ENCODE measurements at regions of chr19 and their contacts with region 1.

Region 1: GRCh38 chr19:20565321-20566018 is at the start of gene ZNF737:
- DNase-seq: peak; percentile 85 to 96 (median 90)
- H3K4me3 ChIP-seq: peak within 1 kb of the TSS; percentile 88
- H3K4me3 Mint-ChIP-seq: peak within 1 kb of the TSS; percentile 96 to 100 (median 100)
- H3K27ac ChIP-seq: peak within 1 kb of the TSS; percentile 85
- H3K27ac Mint-ChIP-seq: peak within 1 kb of the TSS; percentile 96 to 100 (median 99)
- H3K4me1 ChIP-seq: peaks cover 6% of the 10 kb centered on the region
- H3K4me1 Mint-ChIP-seq: peaks cover 31 to 46% (median 42%) of the 10 kb centered on the region in 3 donors
- H3K27me3 ChIP-seq: no peaks in the 10 kb centered on the region
- H3K27me3 Mint-ChIP-seq: no peaks in the 10 kb centered on the region
- total RNA-seq, gene ZNF737: 12.5 to 14.3 TPM

Region 2: GRCh38 chr19:20423381-20424197 is 141.9 kb before region 1 on chr19:
- CTCF ChIA-PET with region 1: interaction called, 6 read pairs
- POLR2A ChIA-PET with region 1: interaction called, 20 read pairs
- DNase-seq: peak in 4 of 5 donors; percentile 3 to 35 (median 20)
- H3K4me3 ChIP-seq: peak overlapping the region; percentile 69
- H3K4me3 Mint-ChIP-seq: peak overlapping the region; percentile 95 to 98 (median 97)
- H3K27ac ChIP-seq: no peak overlapping the region
- H3K27ac Mint-ChIP-seq: peak overlapping the region; percentile 65 to 96 (median 94)
- H3K4me1 ChIP-seq: no peaks in the 10 kb centered on the region
- H3K4me1 Mint-ChIP-seq: peaks cover 14 to 24% (median 21%) of the 10 kb centered on the region in 3 donors
- H3K27me3 ChIP-seq: no peaks in the 10 kb centered on the region
- H3K27me3 Mint-ChIP-seq: peaks cover 0 to 4% of the 10 kb centered on the region in 2 donors

Region 3: GRCh38 chr19:20616071-20616470 is 50.6 kb after region 1 on chr19:
- CTCF ChIA-PET with region 1: no interaction called
- POLR2A ChIA-PET with region 1: no interaction called
- DNase-seq: no peak
- H3K4me3 ChIP-seq: no peak overlapping the region
- H3K4me3 Mint-ChIP-seq: no peak overlapping the region
- H3K27ac ChIP-seq: no peak overlapping the region
- H3K27ac Mint-ChIP-seq: no peak overlapping the region
- H3K4me1 ChIP-seq: no peaks in the 10 kb centered on the region
- H3K4me1 Mint-ChIP-seq: peaks cover 7 to 10% (median 9%) of the 10 kb centered on the region in 3 donors
- H3K27me3 ChIP-seq: no peaks in the 10 kb centered on the region
- H3K27me3 Mint-ChIP-seq: peaks cover 0 to 1% of the 10 kb centered on the region in 2 donors